Pancreas (tissue), 10 donors: ENCODE measurements at regions of chr21 and their contacts with region 1.

Region 1: GRCh38 chr21:45140346-45140940 is 66.1 kb downstream of the ADARB1 start:
- DNase-seq: peak in 4 of 6 donors; percentile 51 to 70 (median 56)
- ATAC-seq: peak; percentile 75 to 92 (median 90)
- H3K4me3 ChIP-seq: no peak overlapping the region
- H3K27ac ChIP-seq: no peak overlapping the region
- H3K4me1 ChIP-seq: no peaks in the 10 kb centered on the region
- H3K27me3 ChIP-seq: no peaks in the 10 kb centered on the region
- CTCF ChIP-seq: peak; percentile 6 to 62 (median 52)

Region 2: GRCh38 chr21:44939532-44940115 is 200.8 kb before region 1 on chr21 and contains the start of gene SLX9:
- intact Hi-C with region 1: loop called in 1 of 3 experiments (anchors 10 kb)
- DNase-seq: peak; percentile 65 to 92 (median 80)
- ATAC-seq: peak; percentile 98 to 100 (median 98)
- H3K4me3 ChIP-seq: peak within 1 kb of the TSS; percentile 90 to 98 (median 98)
- H3K27ac ChIP-seq: peak within 1 kb of the TSS in 1 of 4 donors; percentile 27
- H3K4me1 ChIP-seq: peaks cover 6 to 12% (median 6%) of the 10 kb centered on the region in 3 donors
- H3K27me3 ChIP-seq: no peaks in the 10 kb centered on the region
- CTCF ChIP-seq: no peak
- total RNA-seq, gene SLX9: 12.3 to 21.7 (median 14.5) TPM

Region 3: GRCh38 chr21:44949779-44950198 is 190.7 kb before region 1 on chr21:
- intact Hi-C with region 1: loop called in 2 of 3 experiments (anchors 5 to 10 kb)
- DNase-seq: peak; percentile 72 to 98 (median 86)
- ATAC-seq: peak; percentile 86 to 96 (median 91)
- H3K4me3 ChIP-seq: no peak overlapping the region
- H3K27ac ChIP-seq: no peak overlapping the region
- H3K4me1 ChIP-seq: no peaks in the 10 kb centered on the region
- H3K27me3 ChIP-seq: no peaks in the 10 kb centered on the region
- CTCF ChIP-seq: peak; percentile 84 to 94 (median 90)

Region 4: GRCh38 chr21:45074048-45074817 is 66.2 kb before region 1 on chr21 and contains the start of gene ADARB1:
- intact Hi-C with region 1: no loop called
- DNase-seq: peak; percentile 49 to 87 (median 70)
- ATAC-seq: peak; percentile 79 to 88 (median 84)
- H3K4me3 ChIP-seq: peak within 1 kb of the TSS; percentile 75 to 91 (median 88)
- H3K27ac ChIP-seq: peak within 1 kb of the TSS; percentile 76 to 86 (median 84)
- H3K4me1 ChIP-seq: no peaks in the 10 kb centered on the region
- H3K27me3 ChIP-seq: no peaks in the 10 kb centered on the region
- CTCF ChIP-seq: no peak
- total RNA-seq, gene ADARB1: 5.4 to 10.1 (median 6.3) TPM

Region 5: GRCh38 chr21:45439161-45439872 is 298.9 kb after region 1 on chr21:
- intact Hi-C with region 1: loop called in 2 of 3 experiments (anchors 5 to 10 kb)
- DNase-seq: peak; percentile 63 to 95 (median 81)
- ATAC-seq: peak; percentile 82 to 95 (median 92)
- H3K4me3 ChIP-seq: peak overlapping the region in 1 of 4 donors; percentile 31
- H3K27ac ChIP-seq: peak overlapping the region; percentile 27 to 69 (median 44)
- H3K4me1 ChIP-seq: no peaks in the 10 kb centered on the region
- H3K27me3 ChIP-seq: no peaks in the 10 kb centered on the region
- CTCF ChIP-seq: peak; percentile 93 to 98 (median 98)